AG04449 (cell line): ENCODE measurements at regions of chr14 and their contacts with region 1.

Region 1: DNA sequence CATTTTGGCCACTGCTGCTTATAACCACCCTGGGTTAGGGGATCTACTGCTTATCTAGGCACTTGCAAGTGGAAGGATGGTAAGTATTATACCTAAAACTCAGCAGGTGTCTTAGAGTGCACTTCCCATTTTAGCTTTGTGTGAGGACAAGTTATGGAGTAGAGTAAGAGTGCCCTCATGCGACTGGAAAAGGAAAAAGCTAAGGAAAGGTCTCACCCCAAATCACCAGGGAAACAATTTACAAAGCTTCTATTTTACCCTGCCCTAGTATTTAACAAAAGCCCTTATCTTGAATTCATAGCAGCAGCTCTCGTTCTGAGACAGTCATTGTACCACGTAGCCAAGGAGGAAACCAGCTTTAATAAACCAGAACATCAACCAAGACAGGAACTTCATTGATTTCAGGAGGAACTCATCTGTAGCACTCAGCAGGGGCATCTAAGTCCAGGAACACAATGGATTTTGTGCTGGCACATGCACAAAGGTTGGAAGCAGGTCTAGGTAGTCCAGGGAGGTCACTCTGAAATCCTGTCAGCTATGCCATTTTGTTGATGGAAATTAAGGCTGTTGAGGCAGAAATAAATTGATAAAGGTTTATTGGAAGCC is 2.9 kb downstream of the RDH12 start:
- DNase-seq: no peak
- H3K4me3 ChIP-seq: no peak overlapping the region
- CTCF ChIP-seq: peak; percentile 64

Region 2: GRCh38 chr14:67359775-67360648 is 344.6 kb before region 1 on chr14 and contains the starts of genes ATP6V1D and EIF2S1:
- CTCF ChIA-PET with region 1: interaction called, 13 read pairs
- POLR2A ChIA-PET with region 1: no interaction called
- DNase-seq: peak; percentile 96
- H3K4me3 ChIP-seq: peak within 1 kb of the TSS; percentile 97
- CTCF ChIP-seq: peak; percentile 79

Region 3: GRCh38 chr14:67571272-67571850 is 133.2 kb before region 1 on chr14:
- CTCF ChIA-PET with region 1: interaction called, 417 read pairs
- POLR2A ChIA-PET with region 1: no interaction called
- DNase-seq: no peak
- H3K4me3 ChIP-seq: no peak overlapping the region
- CTCF ChIP-seq: peak; percentile 92

Region 4: DNA sequence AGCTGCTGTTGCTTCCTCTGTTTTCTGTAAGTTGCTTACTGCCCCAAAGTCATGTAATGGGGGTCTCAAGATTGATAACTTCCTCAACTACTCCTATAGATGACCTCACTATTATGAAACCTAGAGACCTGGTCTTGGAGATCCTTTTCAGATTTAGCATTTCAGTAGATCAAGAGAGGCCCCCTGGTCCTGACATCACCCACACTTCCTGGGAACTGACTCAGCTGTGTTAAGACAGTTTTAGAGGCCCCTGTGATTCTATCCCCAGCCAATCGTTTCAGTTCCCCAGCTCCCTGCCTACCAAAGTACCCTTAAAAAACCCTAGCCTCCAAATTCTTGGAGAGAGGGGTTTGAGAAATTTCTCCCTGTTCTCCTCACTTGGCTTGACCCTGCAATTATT is 94.1 kb before region 1 on chr14:
- CTCF ChIA-PET with region 1: interaction called, 138 read pairs
- POLR2A ChIA-PET with region 1: no interaction called
- DNase-seq: no peak
- H3K4me3 ChIP-seq: no peak overlapping the region
- CTCF ChIP-seq: no peak

Region 5: DNA sequence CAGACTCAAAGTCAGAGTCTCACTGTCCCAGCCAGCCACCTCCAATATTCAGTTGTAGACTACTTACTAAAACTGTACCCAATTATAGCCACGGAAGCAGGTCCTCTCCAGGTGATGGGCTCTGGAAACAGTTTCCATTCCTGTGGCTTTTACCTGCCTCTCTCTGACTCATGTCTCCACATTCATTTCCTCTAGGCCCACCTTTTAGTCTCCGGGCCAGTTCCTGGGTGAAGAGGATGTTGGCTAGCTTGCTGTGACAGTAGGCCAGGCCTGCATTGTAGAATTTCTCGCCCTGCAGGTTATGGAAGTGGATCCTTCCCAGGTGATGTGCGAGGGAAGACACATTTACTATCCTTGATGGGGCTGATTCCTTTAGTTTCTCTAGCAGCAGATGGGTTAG is 14.6 kb before region 1 on chr14:
- CTCF ChIA-PET with region 1: interaction called, 31 read pairs
- POLR2A ChIA-PET with region 1: interaction called, 4 read pairs
- DNase-seq: no peak
- H3K4me3 ChIP-seq: no peak overlapping the region
- CTCF ChIP-seq: no peak

Region 6: DNA sequence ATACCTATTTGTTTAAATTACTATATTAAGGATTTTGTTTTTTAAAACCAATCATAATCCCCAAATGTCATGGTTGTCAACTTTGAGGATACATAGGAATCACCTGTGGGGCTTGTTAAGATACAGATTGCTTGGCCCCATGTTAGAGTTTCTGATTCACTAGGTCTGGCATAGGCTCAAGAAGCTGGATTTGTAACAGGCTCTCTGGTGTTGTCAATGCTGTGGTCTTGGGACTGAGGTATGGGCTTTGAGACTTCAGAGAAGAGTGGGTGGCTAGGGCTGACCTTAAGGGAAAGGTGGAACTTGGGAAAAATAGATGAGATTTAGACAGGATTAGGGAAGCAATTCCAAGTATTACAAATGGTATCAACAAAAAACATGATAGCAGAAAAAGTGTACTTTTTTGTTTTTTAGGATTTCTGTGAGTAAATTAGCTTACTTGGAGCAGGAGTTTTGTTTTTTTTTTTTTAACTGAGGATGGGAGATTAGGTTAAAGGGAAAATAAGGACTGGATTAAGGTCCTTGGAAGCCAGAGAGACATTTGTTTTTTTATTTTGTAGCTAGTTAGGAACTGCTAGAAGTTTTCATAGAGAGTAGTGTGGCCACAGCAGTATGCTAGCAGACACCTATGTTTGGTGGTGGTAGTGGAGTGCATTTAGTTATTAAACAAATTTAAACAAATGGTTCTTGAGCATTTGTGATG is 203.6 kb after region 1 on chr14:
- CTCF ChIA-PET with region 1: no interaction called
- POLR2A ChIA-PET with region 1: no interaction called
- DNase-seq: no peak
- H3K4me3 ChIP-seq: no peak overlapping the region
- CTCF ChIP-seq: no peak